Activated T-helper 2 cell treated with anti-CD3 and anti-CD28 coated beads, Interferon-gamma antibody, Interleukin-2, Interleukin-4, amounts not matched to agents 10 μg/mL and 5 μg/mL and 100 μg/mL, durations not matched to agents 14 hours and 24 hours and 36 hours (primary cell): ENCODE measurements at regions of chr15 and their contacts with region 1.

Region 1: GRCh38 chr15:78750566-78750965 is 60.7 kb downstream of the ADAMTS7 start:
- DNase-seq: no peak
- H3K4me3 Mint-ChIP-seq: peak overlapping the region; percentile 59
- H3K27ac Mint-ChIP-seq: no peak overlapping the region
- H3K4me1 Mint-ChIP-seq: peaks cover 5% of the 10 kb centered on the region
- H3K27me3 Mint-ChIP-seq: peaks cover 2% of the 10 kb centered on the region

Region 2: DNA sequence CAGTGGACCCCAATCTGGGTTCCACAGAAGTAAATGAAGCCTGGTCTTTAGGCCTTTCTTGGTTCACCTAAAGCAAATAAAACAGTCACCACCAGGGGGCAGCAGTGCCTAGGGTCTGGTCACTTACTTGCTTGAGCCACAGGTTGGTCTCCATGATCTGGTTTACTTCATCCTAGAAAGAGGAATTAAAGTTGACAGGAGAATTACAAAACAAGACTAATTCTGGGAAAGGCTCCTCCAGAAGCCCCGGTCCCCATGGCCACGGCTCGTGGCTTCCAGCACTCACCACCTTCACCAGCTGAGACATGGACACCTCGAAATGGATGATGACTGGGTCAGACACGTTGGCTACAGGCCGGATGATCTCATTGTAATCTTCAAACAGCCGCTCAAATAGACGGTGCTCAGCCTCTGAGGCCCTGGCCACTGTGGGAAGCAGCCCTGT is 132.1 kb before region 1 on chr15:
- intact Hi-C with region 1: loop called (anchors 2 kb)
- DNase-seq: peak; percentile 53
- H3K4me3 Mint-ChIP-seq: no peak overlapping the region
- H3K27ac Mint-ChIP-seq: no peak overlapping the region
- H3K4me1 Mint-ChIP-seq: peaks cover 3% of the 10 kb centered on the region
- H3K27me3 Mint-ChIP-seq: peaks cover 43% of the 10 kb centered on the region